ENCODE measurements at regions of chr3 and their contacts with region 1.

Region 1: DNA sequence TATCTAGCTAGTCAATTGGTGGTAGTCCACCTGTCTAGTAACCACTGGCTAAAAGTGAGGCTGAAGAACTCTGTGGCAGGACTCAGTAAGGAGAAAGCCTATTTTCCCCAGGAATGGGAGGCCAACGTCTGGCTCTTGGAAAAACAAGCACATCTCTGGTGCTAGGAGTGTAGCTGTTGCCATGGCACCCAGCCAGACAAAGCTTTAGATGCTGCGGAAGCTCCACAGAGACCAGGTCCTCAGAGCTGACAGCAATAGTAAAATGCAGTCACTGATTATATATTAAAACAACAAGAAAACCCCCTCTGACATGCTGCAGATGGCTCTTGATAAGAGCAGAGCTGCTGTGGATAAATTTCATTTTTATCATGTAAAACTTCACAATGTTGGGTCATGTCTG is 124.9 kb upstream of the STRIT1 start:
- DNase-seq: no peak
- H3K4me3 ChIP-seq: no peak overlapping the region
- H3K27ac ChIP-seq: no peak overlapping the region
- H3K4me1 ChIP-seq: peaks cover 25% of the 10 kb centered on the region
- H3K27me3 ChIP-seq: no peaks in the 10 kb centered on the region
- CTCF ChIP-seq: no peak

Region 2: GRCh38 chr3:155519078-155519477 is 100.7 kb after region 1 on chr3:
- CTCF ChIA-PET with region 1: no interaction called
- dilution Hi-C with region 1: no loop called
- in situ Hi-C with region 1: no loop called
- intact Hi-C with region 1: loop called (anchors 10 kb)
- DNase-seq: no peak
- H3K4me3 ChIP-seq: no peak overlapping the region
- H3K27ac ChIP-seq: no peak overlapping the region
- H3K4me1 ChIP-seq: peaks cover 8% of the 10 kb centered on the region
- H3K27me3 ChIP-seq: no peaks in the 10 kb centered on the region
- CTCF ChIP-seq: no peak

Region 3: GRCh38 chr3:156014489-156014888 is 596.1 kb after region 1 on chr3:
- CTCF ChIA-PET with region 1: no interaction called
- dilution Hi-C with region 1: no loop called
- in situ Hi-C with region 1: no loop called
- intact Hi-C with region 1: no loop called
- DNase-seq: no peak
- H3K4me3 ChIP-seq: no peak overlapping the region
- H3K27ac ChIP-seq: no peak overlapping the region
- H3K4me1 ChIP-seq: no peaks in the 10 kb centered on the region
- H3K27me3 ChIP-seq: peaks cover 2% of the 10 kb centered on the region
- CTCF ChIP-seq: no peak

Measured in mammary epithelial cell (primary cell).